ENCODE measurements at regions of chr22 and their contacts with region 1.

Region 1: GRCh38 chr22:17074648-17075002 is 10.2 kb upstream of the IL17RA start:
- DNase-seq: no peak
- ATAC-seq: peak; percentile 25; the same call in 1 of the 3 replicates
- H3K4me3 ChIP-seq: no peak overlapping the region
- H3K27ac ChIP-seq: no peak overlapping the region
- H3K4me1 ChIP-seq: peaks cover 0 to 4% of the 10 kb centered on the region in 2 experiments; a peak in 1 of 5 replicates
- H3K27me3 ChIP-seq: no peaks in the 10 kb centered on the region
- CTCF ChIP-seq: no peak
- EP300 ChIP-seq: no peak
- POLR2A ChIP-seq: no peak
- RAD21 ChIP-seq: no peak

Region 2: GRCh38 chr22:16721961-16722360 is 352.7 kb before region 1 on chr22:
- CTCF ChIA-PET with region 1: no interaction called
- POLR2A ChIA-PET with region 1: no interaction called
- in situ Hi-C with region 1: no loop called
- intact Hi-C with region 1: no loop called
- DNase-seq: no peak
- ATAC-seq: no peak
- H3K4me3 ChIP-seq: no peak overlapping the region
- H3K27ac ChIP-seq: no peak overlapping the region
- H3K4me1 ChIP-seq: peaks cover 0 to 6% of the 10 kb centered on the region in 2 experiments; a peak in 2 of 5 replicates
- H3K27me3 ChIP-seq: peaks cover 16 to 18% of the 10 kb centered on the region in 2 experiments
- CTCF ChIP-seq: no peak
- EP300 ChIP-seq: no peak
- POLR2A ChIP-seq: no peak
- RAD21 ChIP-seq: no peak

Region 3: DNA sequence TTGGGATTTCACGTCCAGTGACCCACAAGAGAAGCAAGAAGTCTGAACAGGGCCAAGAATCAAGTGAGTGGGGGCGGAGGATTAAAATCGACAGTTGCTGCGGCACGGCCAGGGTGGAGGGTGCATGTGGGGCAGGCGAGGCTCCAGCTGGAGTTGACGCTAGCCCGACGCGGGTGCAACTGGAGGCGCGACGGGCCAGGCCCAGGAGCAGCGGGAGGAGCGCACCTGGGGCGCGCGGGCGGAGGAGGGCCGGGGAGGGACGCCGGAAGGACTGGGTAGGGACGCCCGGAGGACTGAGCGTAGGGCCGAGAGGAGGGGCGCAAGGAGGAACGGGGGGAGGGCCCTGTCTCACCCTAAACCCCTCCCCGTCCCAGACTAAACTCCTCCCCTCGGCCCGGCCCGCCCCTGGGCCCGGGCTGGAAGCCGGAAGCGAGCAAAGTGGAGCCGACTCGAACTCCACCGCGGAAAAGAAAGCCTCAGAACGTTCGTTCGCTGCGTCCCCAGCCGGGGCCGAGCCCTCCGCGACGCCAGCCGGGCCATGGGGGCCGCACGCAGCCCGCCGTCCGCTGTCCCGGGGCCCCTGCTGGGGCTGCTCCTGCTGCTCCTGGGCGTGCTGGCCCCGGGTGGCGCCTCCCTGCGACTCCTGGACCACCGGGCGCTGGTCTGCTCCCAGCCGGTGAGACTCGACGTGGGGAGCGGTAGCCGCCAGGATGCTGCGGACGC is 10.1 kb after region 1 on chr22 and contains the start of gene IL17RA:
- CTCF ChIA-PET with region 1: interaction called, 4 read pairs
- POLR2A ChIA-PET with region 1: interaction called, 4 read pairs
- in situ Hi-C with region 1: no loop called
- intact Hi-C with region 1: loop called (anchors 2 kb)
- DNase-seq: peak; percentile 95 to 98 (median 97)
- ATAC-seq: peak; percentile 99
- H3K4me3 ChIP-seq: peak within 1 kb of the TSS; percentile 95
- H3K27ac ChIP-seq: peak within 1 kb of the TSS; percentile 81
- H3K4me1 ChIP-seq: peaks cover 0 to 25% of the 10 kb centered on the region in 2 experiments; a peak in 4 of 5 replicates
- H3K27me3 ChIP-seq: no peaks in the 10 kb centered on the region
- CTCF ChIP-seq: no peak
- EP300 ChIP-seq: no peak
- POLR2A ChIP-seq: peak; percentile 84
- RAD21 ChIP-seq: no peak
- polyA plus RNA-seq, gene IL17RA: 0.17 to 0.21 TPM

Region 4: GRCh38 chr22:17501679-17502285 is 427.2 kb after region 1 on chr22:
- CTCF ChIA-PET with region 1: interaction called, 5 read pairs
- POLR2A ChIA-PET with region 1: no interaction called
- in situ Hi-C with region 1: loop called (anchors 5 kb)
- intact Hi-C with region 1: no loop called
- DNase-seq: peak; percentile 51 to 75 (median 56)
- ATAC-seq: peak; percentile 91
- H3K4me3 ChIP-seq: no peak overlapping the region
- H3K27ac ChIP-seq: no peak overlapping the region
- H3K4me1 ChIP-seq: no peaks in the 10 kb centered on the region
- H3K27me3 ChIP-seq: peaks cover 17 to 31% of the 10 kb centered on the region in 2 experiments
- CTCF ChIP-seq: peak; percentile 67 to 95 (median 68); a peak in 5 of 6 replicates
- EP300 ChIP-seq: no peak
- POLR2A ChIP-seq: no peak
- RAD21 ChIP-seq: peak; percentile 87 to 96

Measured in K562 (cell line).